Dendritic cell treated with granulocyte-macrophage colony-stimulating factor and Interleukin-4, amounts not matched to agents 40 ng/mL and 50 ng/mL, for 4 days (primary cell): ENCODE measurements at regions of chr2 and their contacts with region 1.

Region 1: GRCh38 chr2:65388051-65388531 is 44.3 kb downstream of the SPRED2 start:
- H3K4me3 Mint-ChIP-seq: no peak overlapping the region
- H3K27ac Mint-ChIP-seq: no peak overlapping the region
- H3K4me1 Mint-ChIP-seq: peaks cover 41% of the 10 kb centered on the region
- H3K27me3 Mint-ChIP-seq: peaks cover 3% of the 10 kb centered on the region

Region 2: DNA sequence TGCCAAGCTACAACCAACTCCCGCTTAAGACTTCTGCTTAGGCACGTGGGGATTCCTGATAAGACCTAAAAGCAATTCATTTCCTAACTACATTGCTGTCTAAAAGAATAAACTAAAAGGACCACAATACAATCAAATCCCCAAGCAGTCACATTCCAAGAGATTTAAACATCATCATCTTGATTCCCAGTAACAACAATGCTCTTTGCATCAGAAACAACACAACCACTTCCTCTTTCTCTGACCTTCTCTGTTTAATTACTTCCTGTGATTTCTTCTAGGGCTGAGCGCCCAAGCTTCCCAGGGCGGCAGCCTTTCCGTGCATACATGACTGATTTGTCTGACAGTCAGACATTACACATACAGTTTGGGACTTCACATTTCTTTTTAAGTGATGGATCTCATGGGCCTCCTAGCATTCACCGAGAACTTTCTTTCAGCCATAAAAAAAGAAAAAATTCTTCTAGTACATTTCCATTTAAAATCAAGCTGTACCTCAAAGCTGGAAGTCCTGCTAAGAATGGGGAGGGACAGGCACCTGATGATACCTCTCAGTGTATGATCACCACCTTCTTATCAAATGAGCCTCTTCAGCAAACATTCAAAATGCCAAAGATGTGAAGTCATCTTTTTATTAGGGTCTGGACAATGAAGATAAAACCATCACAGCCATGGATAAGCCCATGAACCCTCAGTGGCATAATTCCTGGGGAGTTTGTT is 32.8 kb after region 1 on chr2:
- intact Hi-C with region 1: loop called (anchors 5 kb)
- H3K4me3 Mint-ChIP-seq: peak overlapping the region; percentile 38
- H3K27ac Mint-ChIP-seq: peak overlapping the region; percentile 53
- H3K4me1 Mint-ChIP-seq: peaks cover 13% of the 10 kb centered on the region
- H3K27me3 Mint-ChIP-seq: peaks cover 28% of the 10 kb centered on the region

Region 3: DNA sequence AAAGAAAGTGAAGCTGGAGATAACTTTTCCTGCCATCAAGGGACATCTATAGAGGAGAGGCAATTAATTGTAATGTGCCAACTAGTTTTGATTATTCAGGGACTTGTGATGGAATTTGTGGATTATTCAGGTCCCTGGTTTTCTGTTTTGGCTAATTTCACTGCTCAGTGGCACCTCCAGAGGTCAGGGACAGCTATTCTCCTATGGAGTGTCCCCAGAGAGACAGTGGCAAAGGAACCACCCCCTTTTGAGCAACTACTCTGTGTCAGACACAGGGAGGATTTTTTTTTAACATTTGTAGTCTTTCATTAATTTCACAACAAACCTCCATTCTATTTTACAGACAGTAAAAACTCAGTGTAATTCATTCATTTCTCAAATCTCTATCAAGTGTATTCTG is 250.4 kb after region 1 on chr2:
- intact Hi-C with region 1: no loop called
- H3K4me3 Mint-ChIP-seq: no peak overlapping the region
- H3K27ac Mint-ChIP-seq: no peak overlapping the region
- H3K4me1 Mint-ChIP-seq: peaks cover 5% of the 10 kb centered on the region
- H3K27me3 Mint-ChIP-seq: peaks cover 18% of the 10 kb centered on the region